Activated CD4-positive, alpha-beta T cell treated with anti-CD3 and anti-CD28 coated beads, Interleukin-2, amount 10 ng/mL, durations not matched to agents 7 days and 5 days (primary cell): ENCODE measurements at regions of chr5 and their contacts with region 1.

Region 1: DNA sequence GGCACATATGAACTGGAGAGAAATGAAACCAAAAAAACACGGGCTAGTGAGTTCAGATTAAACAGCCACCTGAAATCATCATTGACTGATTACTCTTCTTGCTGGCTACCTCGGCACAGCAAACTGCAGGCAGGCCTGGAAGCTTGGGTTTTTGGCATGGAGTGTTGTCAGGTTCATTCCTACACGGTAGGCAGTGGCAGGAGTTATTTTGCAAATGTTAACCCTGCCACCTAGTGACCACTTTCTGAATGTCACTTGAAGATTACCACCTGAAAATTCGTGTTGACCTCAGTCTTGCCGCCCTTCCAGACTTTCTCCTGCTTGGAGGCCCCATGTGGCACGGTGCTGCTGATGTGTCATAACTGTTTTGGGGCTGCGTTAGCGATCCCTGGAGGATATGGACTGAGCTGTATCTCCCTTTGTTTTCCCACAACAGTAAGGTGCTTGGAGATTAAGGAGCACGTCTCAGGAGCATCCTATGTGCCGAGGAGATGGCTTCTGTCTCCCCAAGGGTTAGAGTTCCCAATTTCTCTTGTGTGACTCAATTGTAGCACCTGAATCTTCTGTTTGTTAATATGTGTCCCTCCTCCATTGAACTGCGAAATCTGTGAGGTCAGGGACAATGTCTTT is 12.7 kb upstream of the CD180 start:
- DNase-seq: peak; percentile 83
- H3K4me3 Mint-ChIP-seq: no peak overlapping the region
- H3K27ac Mint-ChIP-seq: peak overlapping the region; percentile 80
- H3K4me1 Mint-ChIP-seq: peaks cover 76% of the 10 kb centered on the region
- H3K27me3 Mint-ChIP-seq: no peaks in the 10 kb centered on the region

Region 2: GRCh38 chr5:67165526-67166459 is 43.5 kb before region 1 on chr5:
- CTCF ChIA-PET with region 1: interaction called, 350 read pairs
- POLR2A ChIA-PET with region 1: interaction called, 18 read pairs
- DNase-seq: peak; percentile 87
- H3K4me3 Mint-ChIP-seq: peak overlapping the region; percentile 90
- H3K27ac Mint-ChIP-seq: peak overlapping the region; percentile 99
- H3K4me1 Mint-ChIP-seq: peaks cover 77% of the 10 kb centered on the region
- H3K27me3 Mint-ChIP-seq: no peaks in the 10 kb centered on the region

Region 3: DNA sequence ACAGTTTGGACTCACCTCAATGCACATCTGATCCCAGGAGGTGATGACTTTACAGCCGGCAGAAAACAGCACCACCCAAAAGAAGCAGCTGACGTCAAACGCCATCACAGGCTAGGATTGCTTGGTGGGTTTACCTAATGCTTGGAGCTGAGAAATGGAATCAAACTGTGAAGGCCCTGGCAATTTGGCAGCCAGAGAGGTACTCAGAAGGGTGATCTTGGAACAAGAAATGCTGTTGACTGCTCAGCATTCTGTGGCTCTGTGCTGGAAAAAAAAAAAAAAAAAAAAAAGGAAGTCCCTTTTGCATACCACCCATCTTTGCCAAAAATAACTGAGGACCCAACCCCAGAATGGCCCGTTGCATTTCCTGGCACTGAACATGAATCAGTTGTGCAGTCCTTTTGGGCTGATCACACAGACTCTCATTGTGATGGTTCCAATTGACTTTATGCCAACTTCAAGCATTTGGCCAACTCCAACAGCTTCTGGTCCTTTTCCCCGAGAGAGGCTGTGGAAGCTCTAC is 12.7 kb before region 1 on chr5 and contains the start of gene CD180:
- CTCF ChIA-PET with region 1: interaction called, 14 read pairs
- POLR2A ChIA-PET with region 1: no interaction called
- DNase-seq: no peak
- H3K4me3 Mint-ChIP-seq: no peak within 1 kb of the TSS
- H3K27ac Mint-ChIP-seq: no peak within 1 kb of the TSS
- H3K4me1 Mint-ChIP-seq: peaks cover 67% of the 10 kb centered on the region
- H3K27me3 Mint-ChIP-seq: no peaks in the 10 kb centered on the region
- total RNA-seq, gene CD180: 0.17 TPM

Region 4: DNA sequence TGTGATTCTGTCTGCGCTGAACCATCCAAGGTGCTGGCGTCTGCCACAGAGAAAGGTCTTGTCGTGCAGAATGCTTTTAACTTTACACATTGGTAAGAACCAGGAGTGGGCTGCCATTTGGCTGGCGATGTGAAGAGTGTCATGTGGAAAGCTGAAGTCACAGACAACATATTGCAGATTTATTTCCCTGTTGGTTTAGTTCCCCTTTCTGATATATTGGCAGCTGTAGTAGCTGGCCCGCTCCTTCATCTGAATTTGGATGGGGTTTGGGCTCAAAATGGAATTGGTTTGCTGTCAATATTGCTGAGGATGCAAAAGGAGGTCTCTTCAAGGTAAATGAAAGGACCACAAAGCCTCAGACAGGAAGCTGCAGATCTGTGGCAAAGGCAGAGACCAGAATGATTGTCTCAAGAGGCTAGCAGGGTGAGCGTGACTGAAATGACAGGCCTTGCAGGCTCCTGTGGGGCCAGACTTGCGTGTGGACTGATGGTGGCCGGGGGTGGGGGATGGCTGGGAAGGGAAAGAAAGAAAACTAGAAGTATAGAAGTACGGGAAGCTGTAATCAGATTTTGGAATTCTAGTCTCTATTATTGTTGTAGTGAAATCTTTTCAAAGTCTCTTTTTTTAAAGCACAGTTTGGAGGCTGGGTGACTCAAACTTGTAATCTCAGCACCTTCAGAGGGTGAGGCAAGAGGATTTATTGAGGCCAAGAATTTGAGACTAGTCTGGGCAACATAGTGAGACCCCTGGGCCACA is 12.4 kb after region 1 on chr5:
- CTCF ChIA-PET with region 1: interaction called, 14 read pairs
- POLR2A ChIA-PET with region 1: no interaction called
- DNase-seq: peak; percentile 76
- H3K4me3 Mint-ChIP-seq: peak overlapping the region; percentile 57
- H3K27ac Mint-ChIP-seq: peak overlapping the region; percentile 97
- H3K4me1 Mint-ChIP-seq: peaks cover 61% of the 10 kb centered on the region
- H3K27me3 Mint-ChIP-seq: no peaks in the 10 kb centered on the region